CD4-positive, alpha-beta memory T cell (primary cell): ENCODE measurements at regions of chr3 and their contacts with region 1.

Region 1: DNA sequence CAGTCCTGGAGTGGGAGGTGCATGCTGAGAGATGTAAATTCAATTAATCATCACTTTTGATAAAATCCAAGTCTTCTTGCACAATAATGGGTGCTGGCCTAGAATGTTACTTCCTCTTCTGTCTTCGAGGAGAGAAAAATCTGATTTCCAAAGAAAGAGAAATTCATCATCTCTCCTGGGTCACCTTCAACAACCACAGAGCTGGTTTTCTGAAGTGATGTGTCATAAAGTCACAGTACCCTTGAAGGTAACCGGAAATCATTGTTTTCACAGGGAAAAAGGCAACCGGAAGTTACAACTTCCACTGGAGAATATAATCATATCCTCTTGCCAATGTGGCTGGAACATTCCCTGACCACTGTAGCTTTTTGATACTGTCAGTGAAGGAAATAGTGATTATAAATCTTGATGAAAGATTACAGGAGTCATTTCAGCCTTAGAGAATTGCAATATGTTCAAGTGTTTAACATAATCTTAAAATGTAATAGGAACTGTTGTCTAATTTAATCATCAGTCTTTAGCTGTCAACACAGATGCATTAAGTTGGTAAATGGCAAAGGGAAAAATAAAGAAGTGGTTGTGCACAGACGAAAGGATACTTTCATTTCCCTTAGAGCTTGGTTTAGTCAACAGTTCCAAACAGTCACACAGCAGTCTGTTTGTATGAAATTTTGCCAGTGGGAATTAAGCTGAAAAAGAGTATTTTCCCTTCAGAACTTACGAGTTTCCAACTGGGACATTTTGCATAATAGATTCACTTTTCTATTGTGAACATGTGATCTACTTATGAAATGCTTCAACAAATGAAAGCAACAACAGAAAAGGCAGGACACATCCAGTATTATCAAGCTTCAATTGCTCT is 106.5 kb upstream of the SLC4A7 start:
- DNase-seq: no peak
- H3K4me3 ChIP-seq: no peak overlapping the region
- H3K4me3 Mint-ChIP-seq: peak overlapping the region in 6 of 8 donors; percentile 39 to 70 (median 58)
- H3K27ac ChIP-seq: no peak overlapping the region
- H3K27ac Mint-ChIP-seq: peak overlapping the region; percentile 53 to 89 (median 65)
- H3K4me1 ChIP-seq: peaks cover 30% of the 10 kb centered on the region
- H3K4me1 Mint-ChIP-seq: peaks cover 25 to 37% (median 32%) of the 10 kb centered on the region in 4 donors
- H3K27me3 ChIP-seq: no peaks in the 10 kb centered on the region
- H3K27me3 Mint-ChIP-seq: no peaks in the 10 kb centered on the region

Region 2: GRCh38 chr3:27533718-27534573 is 56.7 kb before region 1 on chr3:
- CTCF ChIA-PET with region 1: interaction called, 3 read pairs
- POLR2A ChIA-PET with region 1: interaction called, 5 read pairs
- intact Hi-C with region 1: loop called (anchors 5 kb)
- DNase-seq: peak; percentile 15 to 59 (median 29)
- H3K4me3 ChIP-seq: peak overlapping the region in 1 of 2 donors; percentile 37
- H3K4me3 Mint-ChIP-seq: peak overlapping the region; percentile 15 to 78 (median 72)
- H3K27ac ChIP-seq: no peak overlapping the region
- H3K27ac Mint-ChIP-seq: peak overlapping the region; percentile 83 to 98 (median 92)
- H3K4me1 ChIP-seq: peaks cover 24% of the 10 kb centered on the region
- H3K4me1 Mint-ChIP-seq: peaks cover 15 to 27% (median 21%) of the 10 kb centered on the region in 4 donors
- H3K27me3 ChIP-seq: no peaks in the 10 kb centered on the region
- H3K27me3 Mint-ChIP-seq: no peaks in the 10 kb centered on the region

Region 3: DNA sequence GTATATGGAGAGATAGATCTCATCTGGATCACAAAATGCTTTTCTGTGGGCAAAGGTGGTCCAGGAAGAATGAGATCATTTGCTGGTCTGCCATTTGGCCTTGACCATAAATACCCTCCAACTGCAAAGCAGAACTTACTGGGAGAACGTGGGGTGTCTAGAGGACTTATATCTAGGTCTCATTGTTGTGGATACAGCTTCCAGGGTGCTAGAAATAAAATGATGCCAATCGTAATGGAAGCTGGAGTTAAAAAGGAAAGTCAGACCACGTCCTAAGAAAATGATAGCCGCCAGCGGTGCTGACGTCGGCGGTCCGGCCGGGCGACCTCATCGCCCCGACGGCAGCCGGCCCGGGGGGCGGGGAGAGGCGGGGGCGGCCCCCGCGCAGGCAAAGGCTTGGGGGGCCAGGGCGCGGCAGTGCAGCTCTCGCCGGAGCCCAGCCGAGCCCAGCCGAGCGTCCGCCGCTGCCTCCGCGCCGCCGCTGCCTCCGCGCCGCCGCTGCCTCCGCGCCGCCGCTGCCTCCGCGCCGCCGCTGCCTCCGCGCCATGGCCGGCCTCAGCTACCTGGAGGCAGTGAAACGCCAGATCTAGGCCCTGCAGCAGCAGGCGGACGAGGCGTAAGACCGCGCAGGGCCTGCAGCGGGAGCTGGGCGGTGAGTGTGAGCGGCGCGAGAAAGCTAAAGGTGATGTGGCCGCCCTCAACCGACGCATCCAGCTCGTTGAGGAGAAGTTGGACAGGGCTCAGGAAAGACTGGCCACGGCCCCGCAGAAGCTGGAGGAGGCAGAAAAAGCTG is 42.0 kb after region 1 on chr3:
- CTCF ChIA-PET with region 1: interaction called, 4 read pairs
- POLR2A ChIA-PET with region 1: interaction called, 18 read pairs
- intact Hi-C with region 1: loop called (anchors 5 kb)
- DNase-seq: peak; percentile 50 to 57 (median 53)
- H3K4me3 ChIP-seq: peak overlapping the region; percentile 8 to 64
- H3K4me3 Mint-ChIP-seq: peak overlapping the region; percentile 90 to 98 (median 94)
- H3K27ac ChIP-seq: peak overlapping the region; percentile 66
- H3K27ac Mint-ChIP-seq: peak overlapping the region; percentile 88 to 98 (median 96)
- H3K4me1 ChIP-seq: peaks cover 26% of the 10 kb centered on the region
- H3K4me1 Mint-ChIP-seq: peaks cover 27 to 45% (median 34%) of the 10 kb centered on the region in 4 donors
- H3K27me3 ChIP-seq: no peaks in the 10 kb centered on the region
- H3K27me3 Mint-ChIP-seq: no peaks in the 10 kb centered on the region